ENCODE measurements at regions of chr9 and their contacts with region 1.

Region 1: DNA sequence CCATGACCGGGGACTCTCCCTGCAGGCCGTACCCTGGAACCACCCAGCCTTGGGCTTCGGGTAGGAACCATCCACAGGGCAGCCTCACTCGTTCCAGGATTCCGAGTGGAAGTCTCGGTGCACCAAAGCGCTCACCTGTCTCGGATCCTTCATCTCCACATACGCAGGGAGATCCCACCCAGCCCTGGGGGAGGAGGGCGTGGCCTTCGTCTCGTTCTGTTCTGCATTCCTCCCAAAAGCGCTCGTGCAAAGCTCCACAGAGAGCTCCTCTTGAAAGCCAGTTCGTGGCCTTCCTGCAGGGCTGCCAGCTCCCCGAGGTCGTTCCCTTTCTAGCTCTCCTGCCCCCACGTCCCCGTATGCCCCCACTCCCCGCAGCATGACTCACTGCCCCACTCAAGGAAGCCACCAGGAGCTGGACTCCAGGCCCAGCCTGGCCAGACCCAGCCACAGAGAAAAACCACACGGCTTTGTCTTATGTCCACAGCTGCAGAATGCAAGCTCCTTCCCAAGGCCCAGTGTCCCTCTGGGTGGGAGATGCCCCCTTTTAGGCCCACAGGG is 65.0 kb upstream of the SARDH start:
- DNase-seq: no peak
- CTCF ChIP-seq: no peak

Region 2: DNA sequence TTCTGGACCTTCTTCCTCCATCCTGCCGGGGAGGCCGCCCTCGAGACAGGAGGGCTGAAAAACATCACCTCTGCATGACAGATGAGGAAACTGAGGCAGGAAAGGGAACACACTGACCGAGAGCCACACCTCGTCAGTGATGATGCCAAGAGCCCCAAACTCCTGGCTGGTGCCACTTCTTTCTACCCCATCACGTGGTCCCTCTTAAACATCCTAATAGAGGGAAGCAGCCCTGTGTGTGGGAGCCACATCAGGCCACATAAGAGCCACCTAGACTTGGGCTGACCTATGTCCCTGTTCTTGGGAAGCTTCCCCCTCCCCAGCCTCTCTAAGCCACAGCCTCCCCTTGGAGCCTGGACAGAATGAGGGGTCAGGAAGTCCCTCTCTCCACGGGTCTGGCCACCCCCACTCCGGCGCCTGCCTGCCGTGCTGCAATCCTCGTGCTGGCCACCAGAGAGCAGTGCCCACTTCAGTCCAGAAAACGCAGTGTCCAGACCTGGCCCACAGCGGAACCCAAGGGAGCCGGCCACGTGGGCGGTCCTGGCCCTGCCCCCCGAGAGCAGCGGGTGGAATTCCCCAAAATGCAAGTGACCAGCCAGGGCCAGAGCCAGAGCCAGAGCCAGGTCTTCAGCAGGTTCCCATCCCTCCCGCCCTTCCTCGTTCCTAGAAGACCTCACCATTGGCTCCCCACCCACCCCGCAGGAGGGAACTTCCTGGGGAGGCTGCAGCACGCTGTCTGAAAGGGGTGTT is 10.2 kb before region 1 on chr9:
- CTCF ChIA-PET with region 1: interaction called, 17 read pairs
- POLR2A ChIA-PET with region 1: no interaction called
- DNase-seq: peak; percentile 89
- CTCF ChIP-seq: peak; percentile 92

Region 3: GRCh38 chr9:133813749-133814585 is 10.9 kb after region 1 on chr9:
- CTCF ChIA-PET with region 1: no interaction called
- POLR2A ChIA-PET with region 1: no interaction called
- DNase-seq: no peak
- CTCF ChIP-seq: no peak